Posterior vena cava (tissue), 2 donors: ENCODE measurements at regions of chr14 and their contacts with region 1.

Region 1: GRCh38 chr14:30885840-30886740 is 11.7 kb downstream of the COCH start:
- DNase-seq: no peak

Region 2: GRCh38 chr14:31745741-31746140 is 859.7 kb after region 1 on chr14:
- intact Hi-C with region 1: loop called in 1 of 2 experiments (anchors 10 kb)
- DNase-seq: no peak